Transverse colon (tissue), 4 donors: ENCODE measurements at regions of chr22 and their contacts with region 1.

Region 1: DNA sequence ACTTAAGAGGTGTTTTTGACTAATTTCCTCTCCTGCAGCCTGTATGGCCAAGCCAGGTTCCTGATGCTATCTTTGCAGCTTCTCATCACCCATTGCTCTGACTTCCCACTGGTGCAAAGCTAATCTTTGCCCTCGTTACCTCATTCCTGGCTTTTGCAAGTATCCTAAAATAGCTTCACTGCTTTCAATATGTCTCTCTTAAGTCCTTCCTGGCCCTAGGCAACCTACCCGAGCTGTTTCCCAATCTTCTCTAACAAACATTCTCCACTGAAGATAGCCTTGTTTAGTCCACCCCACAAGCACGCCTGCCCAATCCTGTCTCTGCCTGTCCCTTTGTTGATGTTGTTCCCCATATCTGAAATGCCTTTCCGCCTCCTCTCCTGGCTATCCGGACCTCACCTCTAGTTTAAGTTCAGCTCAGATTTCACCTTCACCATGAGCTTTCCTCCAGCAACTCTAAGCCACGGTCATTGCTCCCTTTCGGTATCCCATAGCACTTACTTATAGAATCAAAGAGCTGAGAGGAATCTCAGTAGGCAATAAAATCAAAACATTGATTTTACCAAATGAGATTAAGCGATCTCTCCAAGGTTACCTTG is 30.1 kb upstream of the CECR2 start:
- DNase-seq: no peak
- H3K4me3 ChIP-seq: no peak overlapping the region
- H3K27ac ChIP-seq: no peak overlapping the region
- H3K4me1 ChIP-seq: no peaks in the 10 kb centered on the region
- H3K27me3 ChIP-seq: no peaks in the 10 kb centered on the region
- CTCF ChIP-seq: no peak
- EP300 ChIP-seq: no peak
- POLR2A ChIP-seq: no peak

Region 2: GRCh38 chr22:17243524-17243923 is 95.7 kb before region 1 on chr22:
- in situ Hi-C with region 1: loop called in 1 of 4 experiments (anchors 25 kb)
- intact Hi-C with region 1: no loop called
- DNase-seq: peak; percentile 27
- H3K4me3 ChIP-seq: no peak overlapping the region
- H3K27ac ChIP-seq: peak overlapping the region in 3 of 4 donors; percentile 12 to 32 (median 13)
- H3K4me1 ChIP-seq: no peaks in the 10 kb centered on the region
- H3K27me3 ChIP-seq: no peaks in the 10 kb centered on the region
- CTCF ChIP-seq: no peak
- EP300 ChIP-seq: no peak
- POLR2A ChIP-seq: no peak

Region 3: GRCh38 chr22:17281440-17281841 is 57.8 kb before region 1 on chr22:
- in situ Hi-C with region 1: no loop called
- intact Hi-C with region 1: no loop called
- DNase-seq: no peak
- H3K4me3 ChIP-seq: no peak overlapping the region
- H3K27ac ChIP-seq: no peak overlapping the region
- H3K4me1 ChIP-seq: peaks cover 0 to 7% (median 0%) of the 10 kb centered on the region in 4 donors
- H3K27me3 ChIP-seq: no peaks in the 10 kb centered on the region
- CTCF ChIP-seq: no peak
- EP300 ChIP-seq: no peak
- POLR2A ChIP-seq: no peak